CD8-positive, alpha-beta memory T cell (primary cell): ENCODE measurements at regions of chr3 and their contacts with region 1.

Region 1: GRCh38 chr3:170098753-170099152 is 61.0 kb downstream of the GPR160 start:
- DNase-seq: no peak
- H3K4me3 ChIP-seq: no peak overlapping the region
- H3K4me3 Mint-ChIP-seq: no peak overlapping the region
- H3K27ac ChIP-seq: no peak overlapping the region
- H3K27ac Mint-ChIP-seq: peak overlapping the region in 5 of 8 donors; percentile 4 to 81 (median 29)
- H3K4me1 ChIP-seq: no peaks in the 10 kb centered on the region
- H3K4me1 Mint-ChIP-seq: peaks cover 4 to 13% (median 6%) of the 10 kb centered on the region in 3 donors
- H3K27me3 ChIP-seq: no peaks in the 10 kb centered on the region
- H3K27me3 Mint-ChIP-seq: no peaks in the 10 kb centered on the region

Region 2: DNA sequence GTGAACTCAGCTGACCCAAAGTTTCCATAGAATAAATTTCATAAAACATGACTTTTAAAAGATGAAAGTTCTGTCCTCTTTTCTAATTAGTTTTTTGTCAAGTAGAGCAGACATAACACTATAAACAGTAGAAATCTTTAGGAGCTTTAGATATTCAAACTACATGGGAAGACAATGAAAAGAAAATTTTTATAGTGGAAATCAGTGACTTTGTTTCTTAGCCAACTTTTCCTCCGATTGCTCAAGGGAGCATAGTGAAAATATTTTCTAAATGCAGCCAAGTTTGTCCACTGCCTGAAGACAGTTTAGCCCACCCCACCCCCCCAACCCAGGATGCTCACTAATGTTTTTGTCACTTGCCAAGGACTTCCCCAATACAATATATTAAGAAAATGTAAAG is 1596.7 kb after region 1 on chr3:
- CTCF ChIA-PET with region 1: no interaction called
- POLR2A ChIA-PET with region 1: interaction called, 10 read pairs
- DNase-seq: no peak
- H3K4me3 ChIP-seq: no peak overlapping the region
- H3K4me3 Mint-ChIP-seq: no peak overlapping the region
- H3K27ac ChIP-seq: no peak overlapping the region
- H3K27ac Mint-ChIP-seq: no peak overlapping the region
- H3K4me1 ChIP-seq: no peaks in the 10 kb centered on the region
- H3K4me1 Mint-ChIP-seq: peaks cover under 1 to 3% (median 1%) of the 10 kb centered on the region in 3 donors
- H3K27me3 ChIP-seq: no peaks in the 10 kb centered on the region
- H3K27me3 Mint-ChIP-seq: peaks cover 8 to 34% of the 10 kb centered on the region in 2 donors